WTC11 (cell line): ENCODE measurements at regions of chr13 and their contacts with region 1.

Region 1: GRCh38 chr13:54185785-54186184 is 1157.2 kb downstream of the OLFM4 start:
- DNase-seq: peak; percentile 51
- ATAC-seq: peak; percentile 97
- H3K4me3 Mint-ChIP-seq: no peak overlapping the region
- H3K27ac Mint-ChIP-seq: peak overlapping the region; percentile 78
- H3K4me1 Mint-ChIP-seq: peaks cover 53% of the 10 kb centered on the region
- H3K27me3 Mint-ChIP-seq: no peaks in the 10 kb centered on the region
- CTCF ChIP-seq: peak; percentile 46

Region 2: DNA sequence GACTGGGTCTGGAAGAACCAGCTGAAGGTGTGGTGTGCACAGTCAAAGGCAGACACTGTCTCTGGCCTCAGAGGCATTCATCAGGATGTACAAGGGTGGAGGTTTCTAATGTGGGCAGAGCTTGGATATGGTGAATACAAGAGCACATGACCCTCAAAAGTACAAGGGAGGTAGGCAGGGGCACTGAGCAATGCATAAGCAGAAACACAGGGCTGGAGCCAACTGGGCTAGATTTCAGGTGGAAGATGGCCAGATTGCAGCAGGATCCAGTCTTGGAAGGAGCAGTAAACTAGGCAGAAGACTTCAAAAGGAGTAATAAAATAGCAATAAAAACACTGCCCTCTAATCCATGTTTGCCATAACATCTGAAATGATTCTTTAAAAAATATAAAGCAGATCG is 740.1 kb before region 1 on chr13:
- CTCF ChIA-PET with region 1: no interaction called
- POLR2A ChIA-PET with region 1: no interaction called
- DNase-seq: no peak
- ATAC-seq: no peak
- H3K4me3 Mint-ChIP-seq: no peak overlapping the region
- H3K27ac Mint-ChIP-seq: no peak overlapping the region
- H3K4me1 Mint-ChIP-seq: no peaks in the 10 kb centered on the region
- H3K27me3 Mint-ChIP-seq: peaks cover 7% of the 10 kb centered on the region
- CTCF ChIP-seq: no peak

Region 3: GRCh38 chr13:53782488-53782961 is 403.3 kb before region 1 on chr13:
- CTCF ChIA-PET with region 1: interaction called, 18 read pairs
- POLR2A ChIA-PET with region 1: no interaction called
- DNase-seq: no peak
- ATAC-seq: peak; percentile 76
- H3K4me3 Mint-ChIP-seq: peak overlapping the region; percentile 56
- H3K27ac Mint-ChIP-seq: no peak overlapping the region
- H3K4me1 Mint-ChIP-seq: peaks cover 37% of the 10 kb centered on the region
- H3K27me3 Mint-ChIP-seq: peaks cover 5% of the 10 kb centered on the region; the same call in 1 of the 2 replicates
- CTCF ChIP-seq: peak; percentile 80

Region 4: DNA sequence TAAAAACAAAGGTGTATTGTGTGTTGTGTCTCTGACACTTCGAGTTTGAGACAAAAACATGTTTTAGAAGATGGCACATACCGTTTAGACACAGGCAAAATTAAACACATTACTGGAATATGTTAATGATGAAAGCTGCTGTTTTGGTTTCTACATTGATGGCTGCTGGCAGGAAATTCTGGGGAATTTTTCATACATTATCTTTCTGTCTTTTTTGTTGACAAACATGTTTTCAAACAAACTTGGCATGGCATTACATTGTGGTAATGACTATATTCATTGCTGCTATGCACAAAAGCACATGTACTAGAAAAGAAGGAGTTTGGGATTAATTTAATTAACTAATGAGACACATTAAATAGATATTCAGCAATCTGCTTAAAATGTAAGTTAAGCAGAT is 30.4 kb after region 1 on chr13:
- CTCF ChIA-PET with region 1: no interaction called
- POLR2A ChIA-PET with region 1: no interaction called
- DNase-seq: no peak
- ATAC-seq: no peak
- H3K4me3 Mint-ChIP-seq: no peak overlapping the region
- H3K27ac Mint-ChIP-seq: no peak overlapping the region
- H3K4me1 Mint-ChIP-seq: peaks cover under 1% of the 10 kb centered on the region
- H3K27me3 Mint-ChIP-seq: peaks cover 3% of the 10 kb centered on the region; the same call in 1 of the 2 replicates
- CTCF ChIP-seq: no peak

Region 5: DNA sequence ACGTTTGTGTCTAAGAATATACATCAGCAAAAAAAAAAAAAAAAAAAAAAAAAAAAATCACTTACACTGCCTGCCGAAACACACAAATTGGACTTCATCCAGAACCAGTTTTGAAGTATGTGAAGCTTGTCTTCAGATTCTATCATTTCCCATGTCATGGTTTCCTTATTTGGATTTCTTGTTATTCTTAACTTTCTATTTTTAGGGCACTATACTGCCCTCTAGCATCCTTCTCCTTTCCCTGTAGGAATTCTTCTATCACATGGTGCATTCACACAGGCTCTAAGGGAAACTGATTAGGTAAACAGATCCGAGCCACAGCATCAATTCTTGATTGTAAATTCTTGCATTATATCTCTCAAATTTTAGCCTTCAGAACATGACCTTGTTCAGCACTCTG is 350.3 kb after region 1 on chr13:
- CTCF ChIA-PET with region 1: interaction called, 11 read pairs
- POLR2A ChIA-PET with region 1: no interaction called
- DNase-seq: no peak
- ATAC-seq: peak; percentile 93
- H3K4me3 Mint-ChIP-seq: no peak overlapping the region
- H3K27ac Mint-ChIP-seq: peak overlapping the region; percentile 82; the same call in 1 of the 2 replicates
- H3K4me1 Mint-ChIP-seq: peaks cover 26% of the 10 kb centered on the region
- H3K27me3 Mint-ChIP-seq: no peaks in the 10 kb centered on the region
- CTCF ChIP-seq: no peak